Activated T-helper 2 cell treated with anti-CD3 and anti-CD28 coated beads, Interferon-gamma antibody, Interleukin-2, Interleukin-4, amounts not matched to agents 10 μg/mL and 5 μg/mL and 100 μg/mL, durations not matched to agents 14 hours and 24 hours and 36 hours (primary cell): ENCODE measurements at regions of chr3 and their contacts with region 1.

Region 1: GRCh38 chr3:196739671-196740480 is at the start of gene PAK2:
- DNase-seq: peak; percentile 88
- H3K4me3 Mint-ChIP-seq: peak within 1 kb of the TSS; percentile 100
- H3K27ac Mint-ChIP-seq: peak within 1 kb of the TSS; percentile 100
- H3K4me1 Mint-ChIP-seq: peaks cover 31% of the 10 kb centered on the region
- H3K27me3 Mint-ChIP-seq: no peaks in the 10 kb centered on the region
- total RNA-seq, gene PAK2: 103 and 107 TPM in 2 replicates

Region 2: GRCh38 chr3:196711838-196712513 is 27.9 kb before region 1 on chr3 and contains the starts of genes CEP19 and PIGX:
- intact Hi-C with region 1: loop called (anchors 1 kb)
- DNase-seq: peak; percentile 90
- H3K4me3 Mint-ChIP-seq: peak within 1 kb of the TSS; percentile 95
- H3K27ac Mint-ChIP-seq: peak within 1 kb of the TSS; percentile 97
- H3K4me1 Mint-ChIP-seq: peaks cover 32% of the 10 kb centered on the region
- H3K27me3 Mint-ChIP-seq: no peaks in the 10 kb centered on the region
- total RNA-seq, gene CEP19: 3.7 and 4.5 TPM in 2 replicates
- total RNA-seq, gene PIGX: 65.7 and 70.8 TPM in 2 replicates

Region 3: DNA sequence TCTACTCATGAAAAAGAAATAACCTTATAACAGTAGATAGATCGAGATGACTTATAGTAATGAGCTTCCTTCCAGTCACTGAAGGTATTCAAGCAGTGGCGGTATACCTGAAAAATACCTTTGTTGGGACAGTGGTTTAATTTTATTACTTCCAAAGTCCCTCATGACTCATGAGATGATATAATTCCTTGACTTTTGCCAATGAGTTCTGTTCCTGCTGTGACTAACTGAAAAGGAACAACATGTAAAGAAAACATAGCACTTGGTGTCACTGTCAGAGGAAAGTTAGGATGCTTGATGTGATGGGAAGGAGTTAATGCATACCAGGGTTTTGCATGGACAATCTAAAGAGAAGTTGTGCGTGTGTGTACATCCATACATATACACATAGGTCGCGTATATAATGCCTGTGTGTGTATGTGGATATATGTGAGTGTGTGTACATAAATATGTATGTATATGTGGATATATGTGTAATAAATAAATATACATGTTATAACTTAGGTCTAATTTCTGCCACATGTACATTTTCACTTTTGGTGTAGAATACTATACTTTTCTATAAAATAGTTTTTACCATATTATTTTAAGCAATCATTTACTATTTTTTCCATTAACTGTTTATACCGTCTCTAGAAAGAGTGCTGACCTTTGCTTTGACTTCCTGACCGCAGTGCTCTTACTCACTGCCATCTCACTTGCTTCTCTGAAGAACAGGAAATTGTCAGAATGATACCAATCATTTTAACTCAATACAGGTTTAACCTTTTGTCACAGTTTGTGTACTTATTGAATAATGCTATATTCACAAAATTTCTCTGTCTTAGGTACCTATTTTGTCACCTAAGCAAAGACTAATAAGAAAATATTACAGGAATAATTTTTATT is 12.8 kb before region 1 on chr3:
- intact Hi-C with region 1: loop called (anchors 1 kb)
- DNase-seq: no peak
- H3K4me3 Mint-ChIP-seq: no peak overlapping the region
- H3K27ac Mint-ChIP-seq: peak overlapping the region; percentile 65
- H3K4me1 Mint-ChIP-seq: peaks cover 40% of the 10 kb centered on the region
- H3K27me3 Mint-ChIP-seq: no peaks in the 10 kb centered on the region

Region 4: DNA sequence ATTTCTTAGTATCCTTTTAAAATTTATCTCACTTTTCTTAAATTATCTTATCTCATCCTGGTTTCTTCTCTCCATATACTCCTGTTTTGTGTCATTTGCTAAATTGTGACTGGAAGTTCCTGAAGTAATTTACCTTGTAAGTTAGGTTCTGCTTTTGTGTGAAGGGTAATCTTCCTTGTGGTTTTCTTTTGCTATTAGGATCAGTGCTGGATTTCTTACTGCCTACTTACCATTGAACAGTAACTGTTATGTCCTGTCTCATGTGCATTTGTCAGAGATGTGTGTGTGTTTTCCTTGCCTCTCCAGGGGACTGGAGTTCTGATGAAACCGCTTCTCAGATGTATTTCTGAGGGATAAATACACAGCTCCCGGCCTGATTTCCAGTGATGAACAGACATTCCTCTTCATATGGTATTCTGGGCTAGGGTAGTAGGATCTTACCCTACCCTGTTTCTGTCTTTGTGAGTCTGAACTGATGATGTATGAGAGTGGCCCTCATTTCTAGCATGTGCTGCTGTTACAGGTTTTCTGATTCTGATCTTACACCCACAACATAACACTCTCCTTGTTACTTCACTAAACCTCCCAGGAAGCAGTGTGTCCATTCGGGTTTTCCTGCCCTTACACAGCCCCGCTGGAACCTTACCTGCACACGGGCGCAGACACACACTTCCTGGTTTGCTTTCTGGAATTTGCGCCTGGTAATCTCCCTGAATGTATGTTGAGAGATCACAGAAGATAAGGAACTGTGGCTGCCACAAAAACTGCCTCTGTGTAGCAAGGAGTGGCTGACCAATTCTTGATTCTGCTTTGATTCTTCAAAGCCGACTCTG is 14.4 kb after region 1 on chr3:
- intact Hi-C with region 1: loop called (anchors 2 kb)
- DNase-seq: no peak
- H3K4me3 Mint-ChIP-seq: no peak overlapping the region
- H3K27ac Mint-ChIP-seq: peak overlapping the region; percentile 62
- H3K4me1 Mint-ChIP-seq: peaks cover 40% of the 10 kb centered on the region
- H3K27me3 Mint-ChIP-seq: no peaks in the 10 kb centered on the region

Region 5: GRCh38 chr3:196803891-196804468 is 64.1 kb after region 1 on chr3:
- intact Hi-C with region 1: loop called (anchors 5 kb)
- DNase-seq: no peak
- H3K4me3 Mint-ChIP-seq: no peak overlapping the region
- H3K27ac Mint-ChIP-seq: peak overlapping the region; percentile 89
- H3K4me1 Mint-ChIP-seq: peaks cover 17% of the 10 kb centered on the region
- H3K27me3 Mint-ChIP-seq: no peaks in the 10 kb centered on the region

Region 6: DNA sequence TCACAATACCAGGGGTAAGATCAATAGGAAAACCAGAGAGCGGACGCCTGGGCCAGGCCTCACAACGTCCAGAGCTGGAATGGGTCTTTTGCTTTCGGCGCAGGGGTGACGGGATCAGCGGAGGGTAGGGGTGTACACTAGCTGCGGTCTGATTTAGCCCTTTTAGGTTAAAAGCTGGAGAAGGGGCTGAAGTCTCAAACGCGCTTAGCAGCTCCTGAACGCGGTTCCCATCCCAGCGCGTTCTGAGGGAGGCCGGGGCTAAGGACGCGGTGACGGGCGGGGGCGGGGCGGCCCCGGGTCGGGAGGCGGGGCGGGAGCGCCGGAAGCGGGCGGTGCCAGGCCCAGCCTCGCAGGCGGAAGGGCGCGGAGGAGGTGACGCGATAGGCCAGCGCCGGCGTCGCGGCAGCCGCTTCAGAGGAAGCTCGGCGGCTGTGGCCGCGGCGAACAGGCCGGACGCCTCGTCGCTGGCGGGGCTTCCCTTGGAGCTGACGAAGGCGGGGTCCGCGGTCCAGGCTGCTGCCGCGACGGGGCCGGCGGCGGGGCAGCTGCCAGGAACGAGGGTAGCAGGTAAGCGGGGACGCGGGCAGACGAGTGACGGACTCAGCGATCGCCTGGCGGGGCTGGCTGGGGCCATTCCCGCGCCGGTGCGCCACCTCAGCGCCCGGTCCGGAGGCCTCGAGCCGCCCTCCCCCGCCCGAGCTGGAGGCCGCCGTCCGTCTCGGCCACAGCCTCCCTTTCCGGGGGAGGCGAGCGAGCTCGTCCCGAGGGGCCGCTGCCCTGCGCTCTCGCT is 127.8 kb after region 1 on chr3 and contains the start of gene SENP5:
- intact Hi-C with region 1: loop called (anchors 5 kb)
- DNase-seq: peak; percentile 85
- H3K4me3 Mint-ChIP-seq: peak within 1 kb of the TSS; percentile 98
- H3K27ac Mint-ChIP-seq: peak within 1 kb of the TSS; percentile 97
- H3K4me1 Mint-ChIP-seq: peaks cover 13% of the 10 kb centered on the region
- H3K27me3 Mint-ChIP-seq: peaks cover 2% of the 10 kb centered on the region
- total RNA-seq, gene SENP5: 43.9 and 46.9 TPM in 2 replicates